HEK293 (cell line): ENCODE measurements at regions of chr15 and their contacts with region 1.

Region 1: GRCh38 chr15:74873036-74873755 is at the start of gene SCAMP2:
- H3K4me3 ChIP-seq: peak within 1 kb of the TSS; percentile 96
- H3K27ac ChIP-seq: peak within 1 kb of the TSS; percentile 74
- H3K4me1 ChIP-seq: peaks cover 7% of the 10 kb centered on the region
- CTCF ChIP-seq: no peak

Region 2: GRCh38 chr15:74626752-74627692 is 246.2 kb before region 1 on chr15:
- CTCF ChIA-PET with region 1: no interaction called
- POLR2A ChIA-PET with region 1: no interaction called
- H3K4me3 ChIP-seq: no peak overlapping the region
- H3K27ac ChIP-seq: no peak overlapping the region
- H3K4me1 ChIP-seq: no peaks in the 10 kb centered on the region
- CTCF ChIP-seq: no peak

Region 3: DNA sequence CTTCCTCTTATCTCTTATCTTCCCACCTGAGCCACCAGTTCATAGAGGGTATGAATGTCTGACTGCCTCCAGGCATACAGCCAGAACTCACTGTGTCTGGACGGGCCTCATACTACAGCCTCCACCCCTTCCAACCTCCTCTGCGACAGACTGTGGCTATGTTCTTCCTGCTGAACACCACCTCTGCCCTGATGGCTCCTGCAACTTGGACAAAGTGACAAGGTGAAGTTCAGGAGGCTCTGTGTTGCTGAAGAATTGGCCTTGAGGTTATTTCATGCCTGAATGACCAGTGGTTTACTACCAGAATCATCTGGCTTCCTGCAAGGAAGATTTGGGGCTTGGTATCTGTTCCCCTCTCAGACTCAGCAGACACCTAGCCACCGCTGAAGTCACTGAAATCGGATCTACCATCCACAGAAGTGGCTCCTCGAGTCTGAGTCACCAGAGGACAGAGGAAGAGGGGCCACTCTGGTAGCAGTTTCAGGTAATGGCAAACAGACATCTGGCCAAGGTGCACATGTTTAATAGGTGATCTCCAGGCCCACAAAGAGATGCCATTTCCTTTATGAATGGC is 16.0 kb before region 1 on chr15:
- CTCF ChIA-PET with region 1: no interaction called
- POLR2A ChIA-PET with region 1: interaction called, 20 read pairs
- H3K4me3 ChIP-seq: no peak overlapping the region
- H3K27ac ChIP-seq: peak overlapping the region; percentile 42
- H3K4me1 ChIP-seq: peaks cover 14% of the 10 kb centered on the region
- CTCF ChIP-seq: no peak

Region 4: DNA sequence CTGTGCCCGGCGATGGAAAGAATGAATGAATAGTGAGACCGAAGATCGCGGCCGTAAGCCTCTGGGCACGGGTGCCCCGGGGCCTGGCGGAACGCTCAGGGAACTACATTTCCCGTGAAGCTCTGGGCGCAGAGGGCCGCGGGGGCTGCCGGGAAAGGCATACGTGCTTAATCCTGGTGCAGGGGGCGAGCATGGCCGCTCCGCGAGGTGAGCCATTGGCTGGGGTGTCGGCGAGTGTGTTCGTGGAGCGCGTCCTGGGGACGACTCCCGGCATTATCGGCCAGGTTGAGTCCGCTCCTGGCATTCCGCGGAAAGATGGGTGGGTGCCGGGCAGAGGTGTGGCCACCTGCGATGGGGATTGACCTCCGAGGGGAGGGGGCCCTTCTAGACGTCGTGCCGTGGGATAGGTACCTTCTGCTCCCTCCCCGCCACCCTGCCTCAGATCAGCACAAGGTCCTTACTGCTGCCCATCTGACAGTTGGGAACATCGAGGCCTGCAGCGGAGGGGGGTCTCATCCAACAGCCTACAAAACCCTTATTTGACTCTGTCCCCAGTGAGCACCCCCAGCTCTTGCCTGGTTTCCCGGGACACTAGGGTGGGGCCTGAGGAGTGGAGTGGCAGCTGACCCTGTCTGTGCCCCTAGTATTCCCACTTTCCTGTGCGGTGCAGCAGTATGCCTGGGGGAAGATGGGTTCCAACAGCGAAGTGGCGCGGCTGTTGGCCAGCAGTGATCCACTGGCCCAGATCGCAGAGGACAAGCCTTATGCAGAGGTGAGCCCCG is 16.9 kb after region 1 on chr15 and contains the start of gene MPI:
- CTCF ChIA-PET with region 1: no interaction called
- POLR2A ChIA-PET with region 1: interaction called, 12 read pairs
- H3K4me3 ChIP-seq: peak within 1 kb of the TSS; percentile 75
- H3K27ac ChIP-seq: peak within 1 kb of the TSS; percentile 66
- H3K4me1 ChIP-seq: peaks cover 4% of the 10 kb centered on the region; the same call in 1 of the 2 replicates
- CTCF ChIP-seq: peak; percentile 52